CD8-positive, alpha-beta T cell (primary cell): ENCODE measurements at regions of chrX and their contacts with region 1.

Region 1: DNA sequence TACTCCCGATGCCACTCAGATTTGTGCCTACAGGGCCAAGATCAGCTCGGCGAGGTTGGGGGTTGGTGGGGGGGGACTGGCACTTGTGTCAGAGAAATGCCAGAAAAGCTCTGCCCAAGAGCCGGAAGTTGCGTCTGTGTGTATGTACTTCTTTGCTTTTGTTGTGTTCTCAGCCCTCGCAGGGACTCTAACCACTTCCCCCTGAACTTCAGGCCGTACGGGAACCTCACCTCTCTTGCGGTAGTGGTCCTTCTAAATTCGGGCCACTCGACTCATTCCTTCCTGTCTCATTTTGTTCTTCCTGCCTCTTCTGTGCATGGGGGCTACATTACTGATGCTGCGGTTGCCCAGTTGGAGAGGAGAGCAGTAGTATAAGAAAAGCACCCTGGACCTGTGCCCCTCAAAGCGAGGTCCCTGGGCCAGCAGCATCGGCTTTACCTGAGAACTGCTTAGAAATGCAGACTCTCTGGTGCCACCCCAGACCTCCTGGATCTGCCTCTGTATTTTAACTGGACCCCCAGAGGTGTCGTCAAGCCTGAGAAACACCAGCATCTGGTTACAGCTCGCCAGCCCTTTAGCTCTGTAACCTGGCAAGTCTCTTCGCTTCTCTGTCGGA is 146.3 kb upstream of the RPS6KA3 start:
- DNase-seq: peak; percentile 29 to 86 (median 57)
- ATAC-seq: peak; percentile 69
- H3K4me3 ChIP-seq: peak overlapping the region; percentile 28
- H3K4me3 Mint-ChIP-seq: peak overlapping the region; percentile 53
- H3K27ac ChIP-seq: peak overlapping the region; percentile 57 to 66
- H3K27ac Mint-ChIP-seq: peak overlapping the region; percentile 93
- H3K4me1 ChIP-seq: peaks cover 48% of the 10 kb centered on the region
- H3K4me1 Mint-ChIP-seq: peaks cover 51% of the 10 kb centered on the region
- H3K27me3 ChIP-seq: no peaks in the 10 kb centered on the region
- H3K27me3 Mint-ChIP-seq: no peaks in the 10 kb centered on the region
- CTCF ChIP-seq: no peak

Region 2: GRCh38 chrX:20352935-20353336 is 60.0 kb before region 1 on chrX:
- CTCF ChIA-PET with region 1: no interaction called
- POLR2A ChIA-PET with region 1: no interaction called
- intact Hi-C with region 1: loop called in 1 of 2 experiments (anchors 10 kb)
- DNase-seq: no peak
- ATAC-seq: no peak
- H3K4me3 ChIP-seq: no peak overlapping the region
- H3K4me3 Mint-ChIP-seq: no peak overlapping the region
- H3K27ac ChIP-seq: no peak overlapping the region
- H3K27ac Mint-ChIP-seq: no peak overlapping the region
- H3K4me1 ChIP-seq: peaks cover 23% of the 10 kb centered on the region
- H3K4me1 Mint-ChIP-seq: peaks cover 22% of the 10 kb centered on the region
- H3K27me3 ChIP-seq: no peaks in the 10 kb centered on the region
- H3K27me3 Mint-ChIP-seq: no peaks in the 10 kb centered on the region
- CTCF ChIP-seq: no peak

Region 3: DNA sequence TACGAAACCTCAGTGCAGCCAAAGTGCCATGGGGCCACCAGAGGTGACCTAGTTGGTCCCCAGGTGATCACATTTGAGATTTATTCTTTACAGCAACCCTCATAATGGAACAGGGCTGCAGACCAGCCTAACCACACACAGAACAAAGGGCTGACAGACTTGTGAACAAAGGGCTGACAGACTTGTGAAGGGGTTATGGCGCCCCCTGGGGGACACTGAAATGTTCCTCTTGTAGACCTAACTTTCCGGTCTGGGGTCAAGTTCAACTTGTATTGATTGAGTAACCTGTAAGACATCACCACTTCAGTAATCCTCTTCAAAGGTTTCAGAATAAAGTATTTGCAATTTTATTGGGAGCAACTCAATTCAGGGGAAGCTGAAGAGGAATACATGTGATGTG is 29.6 kb after region 1 on chrX:
- CTCF ChIA-PET with region 1: interaction called, 4 read pairs
- POLR2A ChIA-PET with region 1: interaction called, 11 read pairs
- intact Hi-C with region 1: loop called in 1 of 2 experiments (anchors 1 kb)
- DNase-seq: peak; percentile 64 to 89 (median 87)
- ATAC-seq: peak; percentile 70
- H3K4me3 ChIP-seq: no peak overlapping the region
- H3K4me3 Mint-ChIP-seq: no peak overlapping the region
- H3K27ac ChIP-seq: no peak overlapping the region
- H3K27ac Mint-ChIP-seq: no peak overlapping the region
- H3K4me1 ChIP-seq: peaks cover 63% of the 10 kb centered on the region
- H3K4me1 Mint-ChIP-seq: peaks cover 58% of the 10 kb centered on the region
- H3K27me3 ChIP-seq: no peaks in the 10 kb centered on the region
- H3K27me3 Mint-ChIP-seq: no peaks in the 10 kb centered on the region
- CTCF ChIP-seq: peak; percentile 63